ENCODE measurements at regions of chr7 and their contacts with region 1.

Region 1: DNA sequence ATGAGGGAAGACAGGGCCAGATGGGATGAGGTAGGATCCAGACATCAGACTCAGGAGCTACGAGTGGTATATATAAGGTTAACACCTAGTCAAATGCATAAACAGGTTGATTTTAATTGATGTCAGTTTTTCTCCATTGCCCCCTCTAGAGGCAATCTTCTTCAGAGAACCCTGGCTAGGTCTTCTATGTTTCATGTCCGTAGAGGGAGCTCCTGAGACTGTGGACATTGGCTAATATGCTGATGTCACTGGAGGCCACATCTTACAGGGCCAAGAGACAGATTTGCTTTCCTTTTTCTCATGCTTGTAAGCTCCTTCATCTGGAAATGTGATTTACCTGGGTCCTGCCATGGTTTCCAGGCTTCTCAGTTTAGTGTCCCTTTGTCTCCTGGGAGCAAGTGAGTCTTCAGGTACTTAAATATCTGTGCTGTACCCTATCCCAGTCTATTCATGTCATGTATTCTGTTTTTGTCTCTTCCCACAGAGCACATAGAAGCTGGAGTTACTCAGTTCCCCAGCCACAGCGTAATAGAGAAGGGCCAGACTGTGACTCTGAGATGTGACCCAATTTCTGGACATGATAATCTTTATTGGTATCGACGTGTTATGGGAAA is 161.6 kb upstream of the PRSS1 start:
- DNase-seq: no peak
- H3K4me3 ChIP-seq: no peak overlapping the region
- CTCF ChIP-seq: peak; percentile 71

Region 2: DNA sequence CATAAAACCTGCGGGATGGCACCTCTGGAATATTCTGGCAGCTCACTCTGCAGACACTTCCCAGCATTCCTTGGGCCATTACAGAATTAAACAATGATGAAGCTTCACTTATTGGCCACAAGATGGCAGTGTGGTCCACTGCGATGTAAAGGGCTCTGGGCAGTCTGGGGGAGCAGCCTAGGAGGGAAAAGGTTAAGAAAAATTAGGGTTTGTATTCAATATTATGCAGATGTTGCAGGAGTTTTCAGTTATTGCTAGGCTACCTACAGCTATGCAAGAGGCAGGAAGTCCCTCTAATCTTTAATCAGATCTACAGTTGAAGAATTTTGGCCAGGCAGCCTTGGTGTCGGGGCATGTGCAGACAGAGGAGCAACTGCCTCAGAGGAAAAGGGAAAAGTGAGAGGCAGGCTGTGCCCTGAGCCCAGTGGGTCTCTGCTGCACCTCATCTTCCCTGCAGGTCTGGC is 71.6 kb before region 1 on chr7:
- CTCF ChIA-PET with region 1: interaction called, 14 read pairs
- POLR2A ChIA-PET with region 1: no interaction called
- DNase-seq: peak; percentile 29
- H3K4me3 ChIP-seq: no peak overlapping the region
- CTCF ChIP-seq: peak; percentile 68

Region 3: GRCh38 chr7:142557971-142558582 is 29.6 kb before region 1 on chr7:
- CTCF ChIA-PET with region 1: interaction called, 33 read pairs
- POLR2A ChIA-PET with region 1: no interaction called
- DNase-seq: no peak
- H3K4me3 ChIP-seq: no peak overlapping the region
- CTCF ChIP-seq: peak; percentile 65

Region 4: DNA sequence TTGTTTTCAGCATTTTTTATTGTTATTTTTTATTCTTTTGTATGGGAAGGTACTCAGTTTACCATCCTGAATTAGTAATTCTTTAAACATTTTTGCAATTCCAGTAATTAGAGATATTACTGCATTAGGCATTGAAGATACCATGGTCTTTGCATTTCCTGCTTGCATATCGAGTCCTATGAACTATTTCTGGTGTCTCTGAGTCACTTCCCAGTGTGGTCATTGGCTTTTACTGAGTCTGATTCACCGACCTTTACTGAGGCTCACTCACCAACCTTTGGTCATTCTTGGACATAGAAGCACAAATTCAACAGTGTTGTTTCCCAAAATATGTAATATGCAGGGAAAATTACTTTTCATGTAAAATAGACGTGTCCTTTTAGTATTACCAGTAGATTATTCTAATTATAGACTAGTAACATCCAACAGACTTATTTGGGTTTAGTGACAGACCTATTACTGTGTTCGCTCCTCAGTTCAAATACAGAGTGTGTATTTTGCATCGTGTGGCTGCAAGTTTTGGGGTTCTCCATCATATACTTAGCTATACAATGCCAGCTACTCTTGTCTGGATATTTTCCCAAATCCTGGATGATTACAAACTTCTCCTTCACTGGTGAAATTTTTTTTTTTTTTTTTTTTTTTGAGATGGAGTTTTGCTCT is 19.1 kb before region 1 on chr7:
- CTCF ChIA-PET with region 1: interaction called, 31 read pairs
- POLR2A ChIA-PET with region 1: no interaction called
- DNase-seq: no peak
- H3K4me3 ChIP-seq: no peak overlapping the region
- CTCF ChIP-seq: no peak

Region 5: DNA sequence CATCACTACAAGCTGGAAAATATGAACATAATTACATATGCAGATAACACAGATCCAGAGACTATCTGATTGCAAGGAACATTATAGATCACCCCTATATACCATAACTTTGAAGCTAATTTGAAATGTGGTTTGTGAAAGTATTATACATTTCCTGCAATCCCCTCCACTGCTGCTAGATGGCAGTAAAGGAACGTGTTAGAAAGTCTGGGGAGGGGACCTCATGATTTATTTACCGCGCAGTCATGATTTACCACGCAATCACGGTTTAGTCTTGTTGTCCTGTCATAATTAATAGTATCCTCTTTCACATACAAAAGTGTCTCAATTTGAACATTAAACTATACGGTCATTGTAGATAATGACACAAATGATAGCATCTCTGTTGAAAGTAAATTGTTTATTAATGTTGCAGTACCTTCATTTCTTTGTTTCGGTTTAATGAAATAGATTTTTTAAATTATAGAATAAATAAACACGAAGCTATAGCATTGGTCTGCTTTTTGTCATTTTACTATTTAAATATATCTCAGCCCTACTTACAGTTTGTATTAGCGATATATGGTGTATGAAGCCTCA is 16.3 kb after region 1 on chr7:
- CTCF ChIA-PET with region 1: interaction called, 135 read pairs
- POLR2A ChIA-PET with region 1: no interaction called
- DNase-seq: no peak
- H3K4me3 ChIP-seq: no peak overlapping the region; the same call in 1 of the 2 replicates
- CTCF ChIP-seq: peak; percentile 70

Region 6: DNA sequence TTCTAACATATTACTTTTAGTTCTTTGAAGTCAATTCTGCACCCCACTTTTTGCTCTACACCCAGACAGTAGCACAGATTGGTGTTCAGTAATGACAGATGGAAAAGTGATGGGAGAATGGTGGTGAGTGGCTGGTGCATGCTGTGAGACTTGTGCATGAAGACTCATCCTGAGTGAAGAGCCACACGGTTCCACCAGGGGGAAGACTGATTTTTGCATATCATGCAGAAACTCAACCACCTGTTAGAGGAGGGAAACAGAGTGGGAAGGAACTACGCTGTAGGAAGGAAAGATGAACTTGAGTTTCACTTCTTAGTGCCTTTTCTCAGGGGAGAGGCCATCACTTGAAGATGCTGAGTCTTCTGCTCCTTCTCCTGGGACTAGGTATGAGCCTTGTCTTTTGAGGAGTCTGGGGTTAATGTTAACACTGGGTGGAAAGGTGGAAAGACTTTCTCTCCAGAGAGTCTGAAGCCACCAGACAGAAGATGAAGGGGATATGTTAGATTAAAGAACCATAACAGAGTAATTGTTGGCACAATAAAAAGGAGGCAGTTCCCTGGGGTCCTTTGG is 152.3 kb after region 1 on chr7:
- CTCF ChIA-PET with region 1: no interaction called
- POLR2A ChIA-PET with region 1: no interaction called
- DNase-seq: no peak
- H3K4me3 ChIP-seq: no peak overlapping the region
- CTCF ChIP-seq: no peak

Region 7: GRCh38 chr7:142811154-142811737 is 223.6 kb after region 1 on chr7:
- CTCF ChIA-PET with region 1: interaction called, 10 read pairs
- POLR2A ChIA-PET with region 1: no interaction called
- DNase-seq: no peak
- H3K4me3 ChIP-seq: no peak overlapping the region
- CTCF ChIP-seq: peak; percentile 41

Measured in AG04449 (cell line).